Activated B cell treated with CpG ODN at 0.5 μM for 24 hours (primary cell): ENCODE measurements at regions of chr4 and their contacts with region 1.

Region 1: GRCh38 chr4:40576631-40577480 is 52.8 kb downstream of the RBM47 start:
- DNase-seq: peak; percentile 32
- ATAC-seq: peak; percentile 81
- H3K4me3 Mint-ChIP-seq: peak overlapping the region; percentile 68
- H3K27ac Mint-ChIP-seq: peak overlapping the region; percentile 88
- H3K4me1 Mint-ChIP-seq: peaks cover 50% of the 10 kb centered on the region
- H3K27me3 Mint-ChIP-seq: no peaks in the 10 kb centered on the region
- CTCF ChIP-seq: no peak

Region 2: GRCh38 chr4:40515398-40516293 is 61.2 kb before region 1 on chr4:
- CTCF ChIA-PET with region 1: no interaction called
- POLR2A ChIA-PET with region 1: no interaction called
- intact Hi-C with region 1: loop called (anchors 10 kb)
- DNase-seq: no peak
- ATAC-seq: peak; percentile 79
- H3K4me3 Mint-ChIP-seq: peak overlapping the region; percentile 67
- H3K27ac Mint-ChIP-seq: peak overlapping the region; percentile 48
- H3K4me1 Mint-ChIP-seq: peaks cover 44% of the 10 kb centered on the region
- H3K27me3 Mint-ChIP-seq: no peaks in the 10 kb centered on the region
- CTCF ChIP-seq: no peak

Region 3: GRCh38 chr4:40536032-40536431 is 40.8 kb before region 1 on chr4:
- CTCF ChIA-PET with region 1: no interaction called
- POLR2A ChIA-PET with region 1: no interaction called
- intact Hi-C with region 1: loop called (anchors 1 kb)
- DNase-seq: no peak
- ATAC-seq: peak; percentile 74
- H3K4me3 Mint-ChIP-seq: peak overlapping the region; percentile 46
- H3K27ac Mint-ChIP-seq: peak overlapping the region; percentile 76
- H3K4me1 Mint-ChIP-seq: peaks cover 17% of the 10 kb centered on the region
- H3K27me3 Mint-ChIP-seq: no peaks in the 10 kb centered on the region
- CTCF ChIP-seq: no peak

Region 4: DNA sequence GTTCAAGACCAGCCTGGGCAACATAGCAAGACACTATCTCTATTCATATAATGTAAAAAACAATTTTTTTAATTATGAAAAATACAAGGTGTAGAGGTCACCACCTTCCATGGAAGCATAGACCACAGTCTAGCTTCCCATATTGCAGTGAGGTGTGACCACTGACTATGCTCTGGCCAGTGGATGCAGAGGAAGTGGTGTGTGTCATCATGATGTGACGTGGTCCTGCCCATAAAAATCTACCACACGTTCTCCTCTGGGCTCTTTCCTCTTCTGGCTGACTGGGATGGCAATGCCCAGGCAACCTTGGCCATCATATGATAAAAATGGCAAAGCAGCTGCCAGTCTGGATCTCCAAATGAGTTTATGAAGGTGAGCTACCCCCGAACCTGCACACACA is 12.9 kb before region 1 on chr4:
- CTCF ChIA-PET with region 1: interaction called, 5 read pairs
- POLR2A ChIA-PET with region 1: interaction called, 6 read pairs
- intact Hi-C with region 1: loop called (anchors 2 kb)
- DNase-seq: no peak
- ATAC-seq: no peak
- H3K4me3 Mint-ChIP-seq: no peak overlapping the region
- H3K27ac Mint-ChIP-seq: no peak overlapping the region
- H3K4me1 Mint-ChIP-seq: peaks cover 21% of the 10 kb centered on the region
- H3K27me3 Mint-ChIP-seq: no peaks in the 10 kb centered on the region
- CTCF ChIP-seq: no peak

Region 5: DNA sequence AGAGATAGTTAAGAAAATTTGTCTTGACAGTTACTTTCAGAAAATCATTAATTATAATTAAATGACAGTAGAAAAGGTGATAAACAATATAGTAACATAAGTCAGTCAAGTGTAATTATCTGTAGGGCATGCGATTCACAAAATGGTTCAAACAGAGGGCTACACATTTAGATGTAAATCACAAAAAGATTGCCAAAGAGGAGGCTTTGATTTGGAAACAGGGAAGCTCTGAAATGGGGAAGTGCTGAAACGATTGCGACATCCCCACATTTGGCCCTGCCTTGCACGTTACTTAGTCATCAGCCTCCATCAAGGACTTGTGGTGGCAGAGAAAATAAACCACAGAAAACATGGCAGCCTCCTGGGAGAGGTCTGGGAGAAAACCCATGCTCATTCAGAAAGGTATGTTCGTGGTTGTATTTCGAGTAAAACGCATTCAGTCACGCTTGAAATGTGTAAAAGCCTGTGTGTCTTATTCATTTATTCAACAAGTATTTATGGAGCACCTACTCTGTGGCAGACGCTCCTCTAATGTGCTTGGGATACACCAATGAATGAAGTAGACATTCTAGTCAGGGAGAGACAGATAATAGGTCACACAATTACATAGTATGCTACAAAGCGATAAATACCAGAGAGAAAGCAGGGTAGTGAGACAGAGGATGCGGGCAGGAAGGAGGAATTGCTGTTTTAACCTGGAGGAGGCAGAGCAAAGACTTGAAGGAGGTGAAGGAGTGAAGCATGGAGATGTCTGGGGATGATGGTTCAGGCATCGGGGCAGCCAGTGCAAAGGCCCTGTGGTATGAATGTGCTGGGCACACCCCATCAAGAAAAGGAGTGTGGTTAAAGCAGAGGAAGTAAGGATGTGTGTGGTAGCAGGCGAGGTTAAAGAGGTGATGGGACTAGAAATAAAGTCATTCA is 45.0 kb after region 1 on chr4:
- CTCF ChIA-PET with region 1: no interaction called
- POLR2A ChIA-PET with region 1: interaction called, 5 read pairs
- intact Hi-C with region 1: loop called (anchors 1 kb)
- DNase-seq: peak; percentile 18
- ATAC-seq: peak; percentile 93
- H3K4me3 Mint-ChIP-seq: peak overlapping the region; percentile 39
- H3K27ac Mint-ChIP-seq: peak overlapping the region; percentile 54
- H3K4me1 Mint-ChIP-seq: peaks cover 23% of the 10 kb centered on the region
- H3K27me3 Mint-ChIP-seq: no peaks in the 10 kb centered on the region
- CTCF ChIP-seq: no peak

Region 6: DNA sequence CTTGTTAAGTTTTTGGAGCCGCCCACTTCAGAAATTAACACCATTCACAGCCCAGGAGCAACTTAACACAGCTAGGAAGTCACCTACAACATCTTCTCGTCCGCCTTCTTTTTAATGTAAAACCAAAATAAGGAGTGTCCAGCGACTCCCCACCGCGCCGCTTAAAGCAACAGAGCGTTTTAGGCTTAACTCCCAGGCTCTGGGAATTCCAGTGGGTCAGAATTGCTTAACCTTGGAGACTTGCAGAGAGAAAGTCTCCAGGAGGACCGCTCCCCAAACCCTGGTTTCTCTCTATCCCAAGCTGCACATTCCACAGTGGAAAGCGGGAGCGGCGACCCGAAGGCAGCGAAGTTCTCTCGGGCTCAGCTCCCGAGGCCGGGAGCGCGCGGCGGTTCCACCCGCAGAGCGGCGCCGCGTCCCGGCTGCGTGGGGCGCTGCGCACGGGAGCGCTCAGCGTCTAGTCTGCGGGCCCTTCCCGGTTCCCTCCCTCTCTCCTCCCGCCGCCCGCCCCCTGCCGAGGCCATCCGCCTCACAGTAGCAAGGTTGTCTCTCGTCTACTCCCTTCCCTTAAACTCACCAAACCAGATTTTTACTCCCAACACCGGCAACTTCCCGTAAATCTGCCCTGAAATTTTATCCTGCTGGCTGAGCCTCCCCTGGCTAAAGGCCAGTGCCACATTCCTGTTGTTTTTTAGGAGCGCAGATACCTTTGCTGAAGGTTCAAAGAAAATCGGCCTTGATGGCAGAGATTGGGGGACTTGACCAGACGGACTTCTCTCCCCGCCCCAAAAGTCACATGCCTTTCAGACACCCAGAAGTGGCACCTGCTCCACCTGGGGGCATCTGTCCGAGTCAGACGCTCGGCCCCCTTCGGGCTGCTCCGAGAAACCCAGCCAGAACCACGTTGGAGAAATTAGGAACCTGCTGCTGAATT is 52.8 kb after region 1 on chr4 and contains the start of gene RBM47:
- CTCF ChIA-PET with region 1: no interaction called
- POLR2A ChIA-PET with region 1: no interaction called
- intact Hi-C with region 1: loop called (anchors 2 kb)
- DNase-seq: peak; percentile 29
- ATAC-seq: peak; percentile 65
- H3K4me3 Mint-ChIP-seq: peak within 1 kb of the TSS; percentile 93
- H3K27ac Mint-ChIP-seq: peak within 1 kb of the TSS; percentile 84
- H3K4me1 Mint-ChIP-seq: peaks cover 22% of the 10 kb centered on the region
- H3K27me3 Mint-ChIP-seq: peaks cover 5% of the 10 kb centered on the region
- CTCF ChIP-seq: no peak
- total RNA-seq, gene RBM47: 6.3 and 8.0 TPM in 2 replicates

Region 7: GRCh38 chr4:40719008-40719623 is 142.3 kb after region 1 on chr4:
- CTCF ChIA-PET with region 1: no interaction called
- POLR2A ChIA-PET with region 1: no interaction called
- intact Hi-C with region 1: loop called (anchors 1 kb)
- DNase-seq: no peak
- ATAC-seq: no peak
- H3K4me3 Mint-ChIP-seq: no peak overlapping the region
- H3K27ac Mint-ChIP-seq: no peak overlapping the region
- H3K4me1 Mint-ChIP-seq: peaks cover 3% of the 10 kb centered on the region
- H3K27me3 Mint-ChIP-seq: no peaks in the 10 kb centered on the region
- CTCF ChIP-seq: no peak

Region 8: DNA sequence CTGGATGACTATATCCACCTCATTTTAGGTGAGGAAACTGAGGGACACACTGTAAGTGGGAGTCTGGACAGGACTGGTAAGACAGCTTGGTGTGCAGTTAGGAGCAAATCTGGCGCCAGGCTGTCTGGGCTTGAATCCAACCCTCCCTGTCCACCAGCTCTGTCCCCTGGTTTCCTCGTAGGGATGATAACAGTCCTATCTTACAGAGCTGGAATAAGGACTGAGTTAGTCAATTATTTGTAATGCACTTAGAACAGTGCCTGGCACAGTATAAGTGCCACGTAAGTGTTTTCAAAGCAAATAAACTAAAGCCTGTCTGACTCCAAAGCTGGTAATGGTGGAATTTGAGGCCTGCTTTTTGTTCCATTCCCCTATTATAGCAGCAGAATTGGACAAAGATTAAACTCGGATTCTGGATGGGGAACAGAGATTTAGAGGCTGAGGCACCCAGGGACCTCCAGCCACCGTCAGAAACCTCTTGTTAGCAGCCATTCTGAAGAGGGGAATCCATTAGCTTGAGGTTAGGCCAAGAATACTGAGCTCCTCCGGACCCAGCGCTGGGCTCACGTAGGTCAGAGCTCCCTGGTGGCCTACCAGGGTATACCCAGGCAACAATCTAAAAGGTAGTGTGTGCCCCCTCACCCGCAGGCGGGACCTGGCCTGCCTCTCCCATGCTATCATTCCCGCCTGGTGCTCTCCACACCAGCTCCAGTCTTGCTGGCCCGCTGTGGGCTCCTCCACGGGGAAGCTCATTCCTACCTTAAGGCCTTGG is 782.0 kb after region 1 on chr4:
- CTCF ChIA-PET with region 1: no interaction called
- POLR2A ChIA-PET with region 1: no interaction called
- intact Hi-C with region 1: no loop called
- DNase-seq: no peak
- ATAC-seq: no peak
- H3K4me3 Mint-ChIP-seq: no peak overlapping the region
- H3K27ac Mint-ChIP-seq: no peak overlapping the region
- H3K4me1 Mint-ChIP-seq: peaks cover 7% of the 10 kb centered on the region
- H3K27me3 Mint-ChIP-seq: peaks cover 41% of the 10 kb centered on the region
- CTCF ChIP-seq: no peak